Naive thymus-derived CD4-positive, alpha-beta T cell (primary cell): ENCODE measurements at regions of chr10 and their contacts with region 1.

Region 1: GRCh38 chr10:4953405-4953804 is 9.8 kb upstream of the AKR1C1 start:
- DNase-seq: no peak
- ATAC-seq: no peak
- H3K4me3 ChIP-seq: no peak overlapping the region
- H3K4me3 Mint-ChIP-seq: no peak overlapping the region
- H3K27ac ChIP-seq: no peak overlapping the region
- H3K27ac Mint-ChIP-seq: no peak overlapping the region
- H3K4me1 ChIP-seq: no peaks in the 10 kb centered on the region
- H3K4me1 Mint-ChIP-seq: no peaks in the 10 kb centered on the region
- H3K27me3 ChIP-seq: no peaks in the 10 kb centered on the region
- H3K27me3 Mint-ChIP-seq: no peaks in the 10 kb centered on the region

Region 2: GRCh38 chr10:5014936-5015335 is 61.5 kb after region 1 on chr10:
- CTCF ChIA-PET with region 1: no interaction called
- POLR2A ChIA-PET with region 1: no interaction called
- intact Hi-C with region 1: loop called in 1 of 2 experiments (anchors 5 kb)
- DNase-seq: peak in 1 of 9 donors; percentile 1
- ATAC-seq: no peak
- H3K4me3 ChIP-seq: no peak overlapping the region
- H3K4me3 Mint-ChIP-seq: no peak overlapping the region
- H3K27ac ChIP-seq: no peak overlapping the region
- H3K27ac Mint-ChIP-seq: no peak overlapping the region
- H3K4me1 ChIP-seq: no peaks in the 10 kb centered on the region
- H3K4me1 Mint-ChIP-seq: no peaks in the 10 kb centered on the region
- H3K27me3 ChIP-seq: no peaks in the 10 kb centered on the region
- H3K27me3 Mint-ChIP-seq: peaks cover 0 to 14% (median 4%) of the 10 kb centered on the region in 5 donors

Region 3: GRCh38 chr10:5142199-5142598 is 188.8 kb after region 1 on chr10:
- CTCF ChIA-PET with region 1: no interaction called
- POLR2A ChIA-PET with region 1: no interaction called
- intact Hi-C with region 1: no loop called
- DNase-seq: no peak
- ATAC-seq: no peak
- H3K4me3 ChIP-seq: no peak overlapping the region
- H3K4me3 Mint-ChIP-seq: no peak overlapping the region
- H3K27ac ChIP-seq: no peak overlapping the region
- H3K27ac Mint-ChIP-seq: no peak overlapping the region
- H3K4me1 ChIP-seq: no peaks in the 10 kb centered on the region
- H3K4me1 Mint-ChIP-seq: no peaks in the 10 kb centered on the region
- H3K27me3 ChIP-seq: no peaks in the 10 kb centered on the region
- H3K27me3 Mint-ChIP-seq: peaks cover 0 to 10% (median 0%) of the 10 kb centered on the region in 5 donors